Activated CD4-positive, alpha-beta memory T cell treated with anti-CD3 and anti-CD28 coated beads, Interleukin-2, amount 10 ng/mL, durations not matched to agents 7 days and 5 days (primary cell): ENCODE measurements at regions of chr3 and their contacts with region 1.

Region 1: DNA sequence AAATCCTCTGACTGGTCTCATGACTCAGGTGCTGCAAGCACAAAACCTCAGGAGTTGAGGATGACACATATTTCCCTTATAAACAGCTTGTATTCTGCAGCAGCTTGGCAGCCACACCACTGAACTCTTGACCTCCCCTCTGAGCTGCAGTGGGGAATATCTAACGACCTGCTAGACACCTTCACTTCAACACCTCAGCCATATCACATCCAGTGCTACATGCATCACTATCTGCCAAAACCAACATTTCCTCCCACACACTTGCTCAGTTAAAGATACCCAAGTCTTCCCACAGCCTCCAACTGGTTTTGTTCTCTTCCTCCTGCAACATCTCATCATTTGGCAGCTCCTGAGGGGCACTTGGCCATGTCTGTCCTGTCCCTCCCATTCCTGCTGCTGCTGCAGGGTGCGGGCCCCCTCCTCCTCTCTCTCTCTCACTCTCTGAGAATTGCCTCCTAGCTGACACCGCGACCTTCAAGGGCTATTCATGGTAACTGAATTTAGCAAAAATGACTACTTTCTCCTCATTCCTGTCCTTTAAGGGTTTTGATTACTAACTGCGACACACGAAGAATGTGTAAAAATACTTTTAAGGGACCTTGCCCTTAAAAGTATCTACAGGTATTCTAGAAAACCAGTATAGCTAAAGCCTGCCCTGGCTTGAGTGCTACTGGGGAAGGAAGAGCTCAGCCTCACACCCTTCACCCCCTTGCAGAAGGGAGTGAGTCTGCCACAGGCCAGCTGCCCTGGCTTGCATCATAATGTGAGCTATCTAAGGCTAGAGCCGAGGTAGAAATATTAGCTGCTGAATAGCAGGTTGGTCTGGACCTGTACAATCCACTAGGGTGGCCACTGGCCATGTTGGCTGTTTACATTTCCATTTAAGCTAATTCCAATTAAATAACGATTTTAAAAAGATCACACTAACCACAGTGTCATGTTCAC is 5.0 kb upstream of the CCR9 start:
- DNase-seq: peak; percentile 65
- H3K4me3 Mint-ChIP-seq: no peak overlapping the region
- H3K27ac Mint-ChIP-seq: no peak overlapping the region
- H3K4me1 Mint-ChIP-seq: peaks cover 29% of the 10 kb centered on the region
- H3K27me3 Mint-ChIP-seq: peaks cover 60% of the 10 kb centered on the region

Region 2: DNA sequence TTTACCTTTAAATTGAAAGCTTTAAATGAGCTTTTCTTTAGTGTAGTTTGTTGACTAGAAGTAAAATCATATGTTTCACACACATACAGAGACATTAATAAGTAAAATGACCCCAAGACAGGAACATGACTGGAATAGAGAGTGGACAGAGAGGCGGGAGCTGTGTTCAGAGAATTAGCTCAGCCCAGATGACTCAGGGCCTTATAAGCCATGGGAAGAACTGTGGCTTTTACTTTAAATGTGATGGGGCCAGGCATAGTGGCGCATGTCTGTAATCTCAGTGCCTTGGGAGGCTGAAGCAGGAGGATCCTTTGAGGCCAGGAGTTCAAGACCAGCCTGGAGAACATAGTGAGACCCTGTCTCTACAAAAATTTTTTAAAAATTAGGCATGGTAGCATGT is 165.4 kb before region 1 on chr3:
- CTCF ChIA-PET with region 1: no interaction called
- POLR2A ChIA-PET with region 1: no interaction called
- DNase-seq: no peak
- H3K4me3 Mint-ChIP-seq: no peak overlapping the region
- H3K27ac Mint-ChIP-seq: no peak overlapping the region
- H3K4me1 Mint-ChIP-seq: peaks cover 10% of the 10 kb centered on the region
- H3K27me3 Mint-ChIP-seq: no peaks in the 10 kb centered on the region

Region 3: GRCh38 chr3:45864760-45865519 is 16.4 kb before region 1 on chr3:
- CTCF ChIA-PET with region 1: interaction called, 3 read pairs
- POLR2A ChIA-PET with region 1: interaction called, 10 read pairs
- DNase-seq: peak; percentile 37
- H3K4me3 Mint-ChIP-seq: no peak overlapping the region
- H3K27ac Mint-ChIP-seq: peak overlapping the region; percentile 5
- H3K4me1 Mint-ChIP-seq: peaks cover 67% of the 10 kb centered on the region
- H3K27me3 Mint-ChIP-seq: peaks cover 82% of the 10 kb centered on the region

Region 4: DNA sequence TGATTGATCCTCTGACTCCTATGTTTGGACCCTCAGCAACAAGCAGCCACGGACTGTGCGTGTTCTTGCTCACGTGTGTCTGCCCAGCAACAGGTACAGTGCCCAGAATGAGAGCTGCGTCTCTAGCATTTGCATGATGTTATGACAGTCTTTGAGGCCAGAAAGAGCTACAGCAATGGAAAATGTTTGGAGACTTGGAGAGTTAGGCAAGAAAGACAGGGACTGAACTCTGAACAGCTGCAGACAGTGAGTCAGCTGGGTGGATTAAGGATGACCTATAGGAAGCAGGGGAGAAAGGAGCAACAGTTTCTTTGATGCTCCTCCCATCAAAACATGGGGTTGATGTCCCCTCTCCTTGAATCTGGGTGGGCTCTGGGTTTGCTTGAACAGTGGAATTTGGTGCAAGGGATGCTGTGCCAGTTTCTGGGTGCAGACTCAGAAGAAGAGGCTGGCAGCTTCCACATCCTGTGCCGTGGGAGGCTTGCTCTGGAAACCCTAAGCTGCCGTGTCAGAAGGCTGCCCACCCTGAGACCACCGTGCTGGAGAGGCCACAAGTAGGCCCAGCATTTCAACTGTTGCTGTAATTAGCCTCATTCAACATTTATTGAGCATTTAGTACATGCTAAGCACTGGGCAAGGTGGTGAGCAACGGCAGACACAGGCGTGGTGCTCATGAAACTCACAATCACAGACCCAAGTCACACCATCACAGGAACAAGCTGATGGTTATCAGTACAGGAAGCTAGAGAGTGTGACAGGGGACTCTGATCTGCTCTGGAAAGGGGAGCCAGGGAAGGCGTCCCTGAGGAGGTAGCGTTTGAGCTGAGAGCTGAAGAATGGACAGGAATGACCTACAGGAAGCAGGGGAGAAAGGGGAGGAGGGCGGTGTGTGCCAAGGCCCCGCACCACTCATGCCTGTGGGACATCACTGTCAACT is 26.7 kb after region 1 on chr3:
- CTCF ChIA-PET with region 1: no interaction called
- POLR2A ChIA-PET with region 1: interaction called, 10 read pairs
- DNase-seq: peak; percentile 50
- H3K4me3 Mint-ChIP-seq: peak overlapping the region; percentile 2
- H3K27ac Mint-ChIP-seq: peak overlapping the region; percentile 40
- H3K4me1 Mint-ChIP-seq: peaks cover 45% of the 10 kb centered on the region
- H3K27me3 Mint-ChIP-seq: peaks cover 41% of the 10 kb centered on the region